Right lobe of liver (tissue), 6 donors: ENCODE measurements at regions of chr21 and their contacts with region 1.

Region 1: DNA sequence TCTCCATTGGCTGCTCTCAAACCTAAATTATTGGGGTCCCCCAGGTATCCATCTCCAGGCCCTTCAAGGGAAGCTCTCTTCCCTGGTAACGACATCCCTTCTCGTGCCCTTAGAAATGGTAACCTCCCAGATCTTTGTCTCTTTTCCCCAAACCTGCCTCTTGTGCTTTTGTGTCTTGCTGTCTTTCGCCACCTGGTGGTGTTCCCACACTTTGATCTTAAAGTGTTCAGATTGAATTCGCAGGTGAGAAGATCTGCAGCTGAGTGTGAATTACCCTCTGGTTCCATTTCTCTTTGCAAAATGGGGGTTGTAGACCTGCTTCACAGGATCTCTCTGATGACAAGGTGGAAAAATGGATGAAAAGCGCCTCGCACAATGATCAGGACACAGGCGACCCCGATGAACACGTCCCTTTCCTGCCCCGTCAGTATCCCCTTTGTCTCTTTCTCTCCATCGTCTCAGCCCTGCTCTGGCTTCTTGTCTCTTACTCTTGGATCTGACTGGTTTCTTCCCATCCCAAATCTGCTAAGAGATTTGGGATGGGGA is 53.1 kb downstream of the DOP1B start:
- DNase-seq: peak in 2 of 3 donors; percentile 33 to 57
- ATAC-seq: peak; percentile 74 to 82 (median 77)
- H3K4me3 ChIP-seq: no peak overlapping the region
- H3K27ac ChIP-seq: no peak overlapping the region
- H3K4me1 ChIP-seq: peaks cover 0 to 4% (median 0%) of the 10 kb centered on the region in 4 donors
- H3K27me3 ChIP-seq: no peaks in the 10 kb centered on the region
- CTCF ChIP-seq: peak; percentile 50 to 70 (median 55)
- POLR2A ChIP-seq: no peak

Region 2: GRCh38 chr21:36141513-36141925 is 68.2 kb before region 1 on chr21:
- intact Hi-C with region 1: loop called in 1 of 2 experiments (anchors 10 kb)
- DNase-seq: peak; percentile 79 to 87 (median 86)
- ATAC-seq: peak; percentile 98 to 99 (median 99)
- H3K4me3 ChIP-seq: no peak overlapping the region
- H3K27ac ChIP-seq: no peak overlapping the region
- H3K4me1 ChIP-seq: no peaks in the 10 kb centered on the region
- H3K27me3 ChIP-seq: no peaks in the 10 kb centered on the region
- CTCF ChIP-seq: peak; percentile 90 to 91 (median 90)
- POLR2A ChIP-seq: no peak

Region 3: GRCh38 chr21:36156339-36156814 is 53.3 kb before region 1 on chr21:
- intact Hi-C with region 1: loop called in 1 of 2 experiments (anchors 10 kb)
- DNase-seq: peak; percentile 100
- ATAC-seq: peak; percentile 90 to 95 (median 92)
- H3K4me3 ChIP-seq: peak overlapping the region; percentile 84 to 94 (median 84)
- H3K27ac ChIP-seq: peak overlapping the region in 2 of 3 donors; percentile 85
- H3K4me1 ChIP-seq: peaks cover 0 to 5% (median 0%) of the 10 kb centered on the region in 4 donors
- H3K27me3 ChIP-seq: no peaks in the 10 kb centered on the region
- CTCF ChIP-seq: no peak
- POLR2A ChIP-seq: no peak